Common myeloid progenitor, CD34-positive (primary cell): ENCODE measurements at regions of chr20 and their contacts with region 1.

Region 1: DNA sequence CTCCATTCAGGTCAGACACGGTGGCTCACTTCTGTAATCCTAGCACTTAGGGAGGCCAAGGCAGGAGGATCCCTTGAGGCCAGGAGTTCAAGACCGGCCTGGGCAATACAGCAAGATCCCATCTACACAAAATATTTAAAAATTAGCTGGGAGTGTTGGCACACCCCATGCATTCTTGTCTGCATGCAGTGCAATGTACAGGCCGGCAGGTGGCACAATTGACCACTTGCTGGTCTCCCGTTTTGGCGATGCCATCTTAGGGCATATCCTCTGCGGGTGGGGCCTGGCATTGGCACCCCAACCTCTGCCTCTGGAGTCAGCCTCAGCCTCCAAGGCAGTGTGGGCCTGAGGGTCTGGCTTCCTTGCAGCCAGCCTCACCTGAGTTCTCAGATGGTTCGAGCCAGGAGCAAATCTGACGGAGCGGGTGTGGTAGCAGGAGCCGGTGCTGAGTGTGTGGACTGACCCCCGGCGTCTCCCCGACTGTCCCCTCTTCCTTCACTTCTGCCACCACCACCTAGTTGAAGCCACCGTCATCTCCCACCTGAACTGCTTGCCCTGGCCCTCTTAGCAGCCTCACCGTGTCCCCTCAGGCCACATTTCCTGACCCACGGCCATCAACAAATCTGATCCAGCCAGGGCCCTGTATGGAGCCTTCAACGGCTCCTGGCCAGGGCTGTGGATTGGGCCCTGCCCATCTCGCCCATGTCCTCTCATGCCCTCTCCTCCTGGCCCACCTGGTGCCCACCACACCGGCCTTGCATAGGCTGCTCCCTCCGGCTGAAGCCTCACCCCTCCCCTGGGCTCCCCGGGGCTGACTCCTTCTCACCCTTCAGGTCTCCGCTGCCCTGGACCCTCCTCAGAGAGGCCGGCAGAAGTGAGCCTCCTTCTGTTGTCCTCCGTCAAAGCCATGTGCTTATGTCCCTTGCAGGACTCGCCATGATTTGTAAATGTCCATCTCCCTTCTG is 44.0 kb downstream of the EFCAB8 start:
- DNase-seq: peak; percentile 47 to 70 (median 68)
- H3K4me3 ChIP-seq: no peak overlapping the region
- H3K27ac ChIP-seq: no peak overlapping the region
- H3K4me1 ChIP-seq: peaks cover 0 to 7% (median 1%) of the 10 kb centered on the region in 4 experiments
- H3K27me3 ChIP-seq: no peaks in the 10 kb centered on the region

Region 2: DNA sequence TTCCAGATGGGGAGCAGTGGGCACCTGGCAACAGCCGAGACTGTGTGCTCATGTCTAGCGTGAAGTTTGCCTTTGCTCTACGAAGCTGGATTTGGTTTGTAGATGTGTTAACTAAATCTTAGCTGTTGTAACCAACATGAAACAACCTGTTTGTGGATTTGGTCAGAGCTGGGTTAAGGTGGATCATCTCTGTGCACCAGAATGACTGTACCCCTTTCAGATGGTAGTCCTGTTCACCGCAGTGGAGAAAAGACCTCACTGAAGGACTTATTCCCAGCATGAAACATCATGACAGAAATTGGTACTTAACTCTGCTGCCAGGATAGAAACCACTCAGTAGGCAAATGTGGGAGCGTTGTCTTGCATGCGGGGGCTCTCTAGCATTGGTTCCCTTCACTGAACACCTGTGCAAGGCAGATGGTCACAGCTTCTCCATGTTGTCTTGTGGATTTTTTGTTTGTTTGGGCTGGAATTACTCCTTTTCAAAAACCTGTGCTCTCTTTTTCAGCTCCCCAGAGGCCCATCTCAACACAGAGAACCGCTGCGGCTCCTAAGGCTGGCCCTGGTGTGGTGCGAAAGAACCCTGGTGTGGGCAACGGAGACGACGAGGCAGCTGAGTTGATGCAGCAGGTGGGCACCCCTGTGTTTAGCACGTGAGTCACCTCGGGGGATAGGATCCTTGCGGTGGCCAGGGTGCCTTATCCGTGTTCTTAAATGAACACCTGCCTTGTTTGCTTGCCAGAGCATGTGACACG is 63.3 kb before region 1 on chr20:
- CTCF ChIA-PET with region 1: no interaction called
- POLR2A ChIA-PET with region 1: no interaction called
- DNase-seq: no peak
- H3K4me3 ChIP-seq: no peak overlapping the region
- H3K27ac ChIP-seq: no peak overlapping the region
- H3K4me1 ChIP-seq: peaks cover 0 to 4% (median 0%) of the 10 kb centered on the region in 4 experiments
- H3K27me3 ChIP-seq: no peaks in the 10 kb centered on the region

Region 3: DNA sequence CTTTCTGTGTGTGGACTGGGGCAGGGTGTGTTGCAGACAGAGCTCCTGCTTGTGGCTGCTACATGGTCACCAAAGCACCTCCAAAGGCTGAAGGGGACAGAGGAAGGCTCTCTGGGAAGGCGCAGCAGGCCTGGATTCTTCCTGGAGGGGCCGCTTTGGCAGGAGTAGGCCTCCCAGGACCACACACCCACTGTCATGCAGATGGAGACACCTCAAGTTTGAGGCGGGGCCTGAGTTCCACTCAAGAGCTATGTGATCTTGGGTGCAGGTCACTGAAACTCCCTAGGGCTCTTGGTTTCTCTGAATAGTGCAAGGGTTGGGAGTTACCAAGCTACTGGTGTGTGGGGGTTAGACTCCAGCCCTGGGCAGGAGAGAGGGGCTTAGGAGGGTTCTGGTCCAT is 16.1 kb before region 1 on chr20:
- CTCF ChIA-PET with region 1: interaction called, 10 read pairs
- POLR2A ChIA-PET with region 1: no interaction called
- DNase-seq: no peak
- H3K4me3 ChIP-seq: no peak overlapping the region
- H3K27ac ChIP-seq: no peak overlapping the region
- H3K4me1 ChIP-seq: no peaks in the 10 kb centered on the region
- H3K27me3 ChIP-seq: no peaks in the 10 kb centered on the region

Region 4: GRCh38 chr20:32930181-32930580 is 27.4 kb after region 1 on chr20:
- CTCF ChIA-PET with region 1: no interaction called
- POLR2A ChIA-PET with region 1: no interaction called
- DNase-seq: no peak
- H3K4me3 ChIP-seq: no peak overlapping the region
- H3K27ac ChIP-seq: no peak overlapping the region
- H3K4me1 ChIP-seq: no peaks in the 10 kb centered on the region
- H3K27me3 ChIP-seq: no peaks in the 10 kb centered on the region

Region 5: GRCh38 chr20:32945710-32946221 is 43.0 kb after region 1 on chr20:
- CTCF ChIA-PET with region 1: interaction called, 11 read pairs
- POLR2A ChIA-PET with region 1: no interaction called
- DNase-seq: peak in 1 of 3 donors; percentile 17
- H3K4me3 ChIP-seq: no peak overlapping the region
- H3K27ac ChIP-seq: no peak overlapping the region
- H3K4me1 ChIP-seq: peaks cover 0 to 7% (median 0%) of the 10 kb centered on the region in 4 experiments
- H3K27me3 ChIP-seq: peaks cover 0 to 2% (median 0%) of the 10 kb centered on the region in 5 experiments

Region 6: DNA sequence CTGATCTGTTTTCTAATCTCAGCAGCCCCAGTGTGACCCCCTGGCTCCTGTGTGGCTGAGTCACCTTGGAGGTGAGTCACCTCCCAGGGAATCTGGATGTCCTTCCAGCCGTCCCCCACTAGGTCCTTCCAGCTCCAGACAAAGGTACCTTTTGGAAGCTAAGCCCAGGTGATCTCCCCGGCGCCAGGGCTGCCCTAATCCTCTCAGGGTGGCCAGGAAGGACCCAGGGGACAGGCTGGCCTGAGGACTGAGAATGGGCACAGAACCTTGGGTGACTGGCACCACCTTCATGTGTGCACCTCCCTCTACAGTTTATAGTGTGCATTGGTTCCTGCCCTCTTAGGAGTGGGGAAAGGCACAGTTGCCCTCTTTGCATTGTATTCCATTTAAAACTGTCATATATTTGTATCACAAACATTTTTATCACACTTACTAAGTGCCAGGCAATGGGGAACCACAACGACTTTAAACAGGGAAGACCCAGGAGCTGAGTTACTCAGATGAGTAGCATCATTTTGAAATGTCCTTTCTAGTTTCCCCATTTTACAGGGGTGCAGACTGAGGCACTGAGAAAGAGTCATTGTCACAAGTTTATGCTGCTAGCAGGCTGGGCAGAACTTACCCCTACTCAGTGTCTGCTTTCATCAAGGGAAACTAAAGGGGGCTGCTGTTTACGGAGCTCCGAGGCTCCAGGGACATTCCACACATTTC is 174.1 kb after region 1 on chr20:
- CTCF ChIA-PET with region 1: interaction called, 36 read pairs
- POLR2A ChIA-PET with region 1: no interaction called
- DNase-seq: peak in 2 of 3 donors; percentile 41 to 43
- H3K4me3 ChIP-seq: no peak overlapping the region
- H3K27ac ChIP-seq: no peak overlapping the region
- H3K4me1 ChIP-seq: no peaks in the 10 kb centered on the region
- H3K27me3 ChIP-seq: no peaks in the 10 kb centered on the region

Region 7: GRCh38 chr20:33097001-33097400 is 194.3 kb after region 1 on chr20:
- CTCF ChIA-PET with region 1: interaction called, 13 read pairs
- POLR2A ChIA-PET with region 1: interaction called, 3 read pairs
- DNase-seq: no peak
- H3K4me3 ChIP-seq: no peak overlapping the region
- H3K27ac ChIP-seq: no peak overlapping the region
- H3K4me1 ChIP-seq: no peaks in the 10 kb centered on the region
- H3K27me3 ChIP-seq: peaks cover 0 to 1% (median 0%) of the 10 kb centered on the region in 5 experiments

Region 8: GRCh38 chr20:33130568-33131061 is 227.9 kb after region 1 on chr20:
- CTCF ChIA-PET with region 1: no interaction called
- POLR2A ChIA-PET with region 1: no interaction called
- DNase-seq: no peak
- H3K4me3 ChIP-seq: no peak overlapping the region
- H3K27ac ChIP-seq: no peak overlapping the region
- H3K4me1 ChIP-seq: no peaks in the 10 kb centered on the region
- H3K27me3 ChIP-seq: peaks cover 0 to 11% (median 7%) of the 10 kb centered on the region in 5 experiments